PC-3 (cell line): ENCODE measurements at regions of chr20 and their contacts with region 1.

Region 1: GRCh38 chr20:38057351-38057972 is 23.9 kb downstream of the RPRD1B start:
- DNase-seq: peak; percentile 90
- ATAC-seq: peak; percentile 71
- H3K4me3 ChIP-seq: no peak overlapping the region
- H3K27ac ChIP-seq: peak overlapping the region; percentile 6; the same call in 1 of the 2 replicates
- H3K4me1 ChIP-seq: peaks cover 29% of the 10 kb centered on the region
- H3K27me3 ChIP-seq: no peaks in the 10 kb centered on the region
- CTCF ChIP-seq: peak; percentile 98

Region 2: GRCh38 chr20:37901654-37902503 is 155.6 kb before region 1 on chr20:
- CTCF ChIA-PET with region 1: no interaction called
- POLR2A ChIA-PET with region 1: no interaction called
- intact Hi-C with region 1: loop called (anchors 2 kb)
- DNase-seq: peak; percentile 74
- ATAC-seq: peak; percentile 70
- H3K4me3 ChIP-seq: peak overlapping the region; percentile 69
- H3K27ac ChIP-seq: no peak overlapping the region
- H3K4me1 ChIP-seq: peaks cover 6% of the 10 kb centered on the region
- H3K27me3 ChIP-seq: no peaks in the 10 kb centered on the region
- CTCF ChIP-seq: peak; percentile 83

Region 3: DNA sequence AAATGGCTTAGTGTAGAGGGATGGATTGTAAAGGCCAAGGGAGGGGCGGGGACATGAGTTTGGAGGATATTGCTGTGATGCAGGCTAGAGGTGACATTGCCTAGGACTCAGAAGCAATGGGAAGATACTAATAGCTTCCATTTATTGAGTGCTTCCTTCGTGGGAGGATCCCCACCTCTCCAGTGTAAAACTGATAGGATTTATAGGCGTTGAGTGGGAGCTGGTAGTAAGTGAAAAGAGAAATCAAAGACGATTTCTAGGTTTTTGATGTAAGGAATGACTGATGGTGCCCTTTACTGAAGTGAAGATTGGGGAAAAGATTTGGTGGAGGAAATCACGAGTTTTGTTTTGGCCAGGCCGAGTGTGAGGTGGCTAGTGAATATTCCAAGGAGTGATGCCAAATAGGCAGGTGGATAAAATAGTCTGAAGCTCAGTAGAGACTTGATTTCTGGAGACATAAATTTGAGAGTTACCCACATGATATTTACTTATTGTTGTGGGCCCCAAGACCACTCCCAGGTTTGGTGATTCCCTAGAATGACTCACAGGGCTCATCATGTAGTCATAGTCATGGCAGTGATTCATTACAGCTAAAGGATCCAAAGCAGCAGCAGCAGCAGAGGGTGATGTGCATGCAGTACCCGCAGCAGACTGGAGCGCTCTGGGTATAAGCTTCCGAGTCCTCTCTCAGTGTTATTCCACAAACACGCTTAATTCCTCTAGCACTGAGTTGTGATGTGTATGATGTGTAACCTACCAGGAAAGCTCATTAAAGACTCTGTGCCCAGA is 13.8 kb before region 1 on chr20:
- CTCF ChIA-PET with region 1: interaction called, 10 read pairs
- POLR2A ChIA-PET with region 1: interaction called, 7 read pairs
- intact Hi-C with region 1: no loop called
- DNase-seq: peak; percentile 97
- ATAC-seq: peak; percentile 99
- H3K4me3 ChIP-seq: peak overlapping the region; percentile 57
- H3K27ac ChIP-seq: peak overlapping the region; percentile 97
- H3K4me1 ChIP-seq: peaks cover 42% of the 10 kb centered on the region
- H3K27me3 ChIP-seq: no peaks in the 10 kb centered on the region
- CTCF ChIP-seq: peak; percentile 33; the same call in 1 of the 2 replicates

Region 4: GRCh38 chr20:38113401-38114325 is 56.2 kb after region 1 on chr20:
- CTCF ChIA-PET with region 1: interaction called, 3 read pairs
- POLR2A ChIA-PET with region 1: no interaction called
- intact Hi-C with region 1: loop called (anchors 2 kb)
- DNase-seq: peak; percentile 40
- ATAC-seq: no peak
- H3K4me3 ChIP-seq: no peak overlapping the region
- H3K27ac ChIP-seq: no peak overlapping the region
- H3K4me1 ChIP-seq: peaks cover 56% of the 10 kb centered on the region
- H3K27me3 ChIP-seq: no peaks in the 10 kb centered on the region
- CTCF ChIP-seq: peak; percentile 60

Region 5: DNA sequence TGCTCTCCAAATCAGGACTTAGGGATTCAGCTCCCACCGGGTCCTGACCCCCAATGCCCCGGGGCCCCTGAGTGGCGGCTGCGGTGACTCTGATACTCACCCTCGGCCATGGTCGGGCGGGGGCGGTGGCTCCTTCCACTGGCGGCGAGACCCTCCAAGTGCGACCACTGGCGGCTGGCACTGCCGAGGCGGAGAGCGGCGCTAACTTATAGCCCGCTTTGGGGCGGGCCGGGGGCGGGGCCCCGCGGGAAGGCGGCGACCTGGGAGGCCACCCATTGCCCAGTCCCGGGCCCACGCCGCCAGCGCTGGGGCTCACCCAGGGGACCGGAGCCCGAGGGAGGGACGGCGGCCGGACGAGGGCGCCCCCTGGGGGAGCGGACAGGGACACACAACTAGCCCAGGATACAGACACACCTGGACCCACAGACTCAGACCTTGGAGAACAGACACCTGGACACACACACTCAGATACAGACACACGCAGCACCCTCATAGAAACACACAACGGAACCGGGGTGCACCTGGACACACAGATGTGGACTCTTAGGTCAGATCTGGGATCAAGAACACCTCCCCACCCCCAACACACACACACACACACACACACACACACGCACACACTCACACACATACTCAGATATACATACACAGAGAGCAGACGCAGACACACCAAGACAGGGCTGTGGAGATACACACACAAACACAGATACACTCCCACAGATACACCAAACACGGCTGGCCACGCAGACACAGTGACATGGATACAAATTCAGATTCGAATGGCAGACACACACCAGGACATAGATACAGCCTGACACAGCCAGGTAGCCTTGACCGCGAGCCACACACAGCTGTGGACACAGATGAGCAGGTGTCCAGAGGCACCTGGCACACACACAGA is 107.9 kb after region 1 on chr20 and contains the start of gene TGM2:
- CTCF ChIA-PET with region 1: interaction called, 3 read pairs
- POLR2A ChIA-PET with region 1: no interaction called
- intact Hi-C with region 1: loop called (anchors 1 kb)
- DNase-seq: peak; percentile 91
- ATAC-seq: peak; percentile 81
- H3K4me3 ChIP-seq: peak within 1 kb of the TSS; percentile 79
- H3K27ac ChIP-seq: peak within 1 kb of the TSS; percentile 72
- H3K4me1 ChIP-seq: peaks cover 73% of the 10 kb centered on the region
- H3K27me3 ChIP-seq: no peaks in the 10 kb centered on the region
- CTCF ChIP-seq: peak; percentile 87
- total RNA-seq, gene TGM2: 583 and 773 TPM in 2 replicates